Naive thymus-derived CD4-positive, alpha-beta T cell (primary cell): ENCODE measurements at regions of chr12 and their contacts with region 1.

Region 1: DNA sequence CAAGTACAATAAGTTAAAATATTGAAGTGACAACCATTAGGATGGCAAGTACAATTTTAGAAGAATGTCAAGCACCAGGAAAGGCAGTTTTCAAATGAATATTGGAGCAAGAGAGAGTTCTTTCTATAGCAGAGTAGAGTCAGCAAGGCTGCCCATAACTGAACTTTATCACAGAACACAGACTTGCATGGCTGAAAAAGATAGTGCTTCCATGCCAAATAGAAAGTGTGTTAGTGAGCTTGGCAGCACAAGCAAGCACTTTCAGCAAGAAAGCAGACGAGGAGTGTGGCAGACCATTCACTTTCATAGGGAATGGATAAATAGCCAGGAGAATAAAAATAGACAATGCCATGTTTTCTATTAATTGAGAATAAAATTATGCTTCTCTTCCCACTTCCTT is 647.0 kb upstream of the MGAT4C start:
- DNase-seq: no peak
- ATAC-seq: no peak
- H3K4me3 ChIP-seq: no peak overlapping the region
- H3K4me3 Mint-ChIP-seq: no peak overlapping the region
- H3K27ac ChIP-seq: no peak overlapping the region
- H3K27ac Mint-ChIP-seq: no peak overlapping the region
- H3K4me1 ChIP-seq: no peaks in the 10 kb centered on the region
- H3K4me1 Mint-ChIP-seq: no peaks in the 10 kb centered on the region
- H3K27me3 ChIP-seq: no peaks in the 10 kb centered on the region
- H3K27me3 Mint-ChIP-seq: no peaks in the 10 kb centered on the region

Region 2: GRCh38 chr12:86613311-86613710 is 289.8 kb before region 1 on chr12:
- CTCF ChIA-PET with region 1: no interaction called
- POLR2A ChIA-PET with region 1: no interaction called
- intact Hi-C with region 1: loop called in 1 of 2 experiments (anchors 10 kb)
- DNase-seq: no peak
- ATAC-seq: no peak
- H3K4me3 ChIP-seq: no peak overlapping the region
- H3K4me3 Mint-ChIP-seq: no peak overlapping the region
- H3K27ac ChIP-seq: no peak overlapping the region
- H3K27ac Mint-ChIP-seq: no peak overlapping the region
- H3K4me1 ChIP-seq: no peaks in the 10 kb centered on the region
- H3K4me1 Mint-ChIP-seq: no peaks in the 10 kb centered on the region
- H3K27me3 ChIP-seq: no peaks in the 10 kb centered on the region
- H3K27me3 Mint-ChIP-seq: no peaks in the 10 kb centered on the region